Activated B cell treated with CpG ODN at 0.5 μM for 24 hours (primary cell): ENCODE measurements at regions of chr15 and their contacts with region 1.

Region 1: GRCh38 chr15:40307421-40308211 is at the start of gene PLCB2:
- DNase-seq: peak; percentile 67
- ATAC-seq: peak; percentile 77
- H3K4me3 Mint-ChIP-seq: peak within 1 kb of the TSS; percentile 93
- H3K27ac Mint-ChIP-seq: peak within 1 kb of the TSS; percentile 96
- H3K4me1 Mint-ChIP-seq: peaks cover 44% of the 10 kb centered on the region
- H3K27me3 Mint-ChIP-seq: no peaks in the 10 kb centered on the region
- CTCF ChIP-seq: no peak
- total RNA-seq, gene PLCB2: 109 and 126 TPM in 2 replicates

Region 2: GRCh38 chr15:40038638-40039543 is 268.7 kb before region 1 on chr15 and contains the start of gene SRP14:
- CTCF ChIA-PET with region 1: no interaction called
- POLR2A ChIA-PET with region 1: interaction called, 16 read pairs
- intact Hi-C with region 1: no loop called
- DNase-seq: peak; percentile 89
- ATAC-seq: peak; percentile 97
- H3K4me3 Mint-ChIP-seq: peak within 1 kb of the TSS; percentile 99
- H3K27ac Mint-ChIP-seq: peak within 1 kb of the TSS; percentile 95
- H3K4me1 Mint-ChIP-seq: peaks cover 30% of the 10 kb centered on the region
- H3K27me3 Mint-ChIP-seq: no peaks in the 10 kb centered on the region
- CTCF ChIP-seq: no peak
- total RNA-seq, gene SRP14: 183 and 217 TPM in 2 replicates

Region 3: DNA sequence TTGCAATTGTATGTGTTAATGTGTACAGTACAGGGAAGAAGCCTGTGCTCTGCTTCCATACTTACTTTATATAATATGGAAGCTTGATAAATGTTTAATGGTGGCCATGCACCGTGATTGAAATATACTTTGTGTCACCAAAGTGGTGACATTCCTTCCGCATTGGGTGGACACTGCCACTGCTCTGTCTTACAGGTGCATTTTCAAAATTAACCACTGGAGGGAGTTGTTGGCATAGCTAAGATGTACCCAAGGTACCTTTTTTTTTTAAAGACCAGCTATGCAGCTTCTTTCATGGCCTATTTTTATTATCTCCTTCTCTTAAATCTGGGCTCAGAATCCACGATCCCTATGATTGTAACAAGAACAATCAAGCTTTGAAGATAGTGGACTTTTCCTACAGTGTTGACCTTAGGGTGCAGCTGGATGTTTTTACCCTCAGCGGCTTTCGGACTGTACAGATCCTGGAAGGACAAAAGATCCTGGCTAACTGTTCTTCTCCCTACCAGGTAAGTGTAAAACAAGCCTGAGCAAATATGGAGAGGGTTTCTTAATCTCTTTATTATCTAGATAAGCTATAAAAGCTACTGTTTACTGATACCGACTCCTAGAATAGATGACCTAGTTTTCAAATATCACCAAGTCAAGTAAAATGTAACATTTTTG is 90.3 kb before region 1 on chr15:
- CTCF ChIA-PET with region 1: interaction called, 13 read pairs
- POLR2A ChIA-PET with region 1: no interaction called
- intact Hi-C with region 1: no loop called
- DNase-seq: no peak
- ATAC-seq: peak; percentile 100
- H3K4me3 Mint-ChIP-seq: no peak overlapping the region
- H3K27ac Mint-ChIP-seq: no peak overlapping the region
- H3K4me1 Mint-ChIP-seq: no peaks in the 10 kb centered on the region
- H3K27me3 Mint-ChIP-seq: no peaks in the 10 kb centered on the region
- CTCF ChIP-seq: peak; percentile 41

Region 4: DNA sequence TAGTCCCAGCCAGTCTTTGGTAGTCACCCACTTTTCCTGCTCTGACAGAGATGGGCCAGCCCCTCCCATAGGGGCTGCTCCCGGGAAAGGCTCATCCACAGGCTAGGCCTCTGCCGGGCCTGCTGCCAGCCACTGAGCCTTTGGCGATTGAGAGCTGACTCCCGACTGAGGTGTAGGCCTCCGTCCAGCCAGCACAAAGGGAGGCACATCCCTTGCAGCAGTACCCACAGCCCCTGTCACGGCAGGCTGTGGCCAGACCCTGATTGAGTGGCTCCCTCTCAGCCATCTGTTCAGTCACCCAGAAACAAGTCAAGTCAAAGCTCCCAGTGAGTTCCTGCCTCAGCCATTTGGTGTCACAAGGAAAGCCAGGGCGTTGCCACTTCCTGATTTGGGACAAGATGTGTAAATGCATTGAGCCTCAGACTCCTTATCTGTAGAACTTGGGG is 75.0 kb before region 1 on chr15:
- CTCF ChIA-PET with region 1: no interaction called
- POLR2A ChIA-PET with region 1: no interaction called
- intact Hi-C with region 1: no loop called
- DNase-seq: no peak
- ATAC-seq: no peak
- H3K4me3 Mint-ChIP-seq: no peak overlapping the region
- H3K27ac Mint-ChIP-seq: no peak overlapping the region
- H3K4me1 Mint-ChIP-seq: peaks cover 19% of the 10 kb centered on the region
- H3K27me3 Mint-ChIP-seq: no peaks in the 10 kb centered on the region
- CTCF ChIP-seq: no peak

Region 5: GRCh38 chr15:40282144-40282868 is 25.3 kb before region 1 on chr15:
- CTCF ChIA-PET with region 1: interaction called, 124 read pairs
- POLR2A ChIA-PET with region 1: interaction called, 14 read pairs
- intact Hi-C with region 1: loop called (anchors 1 kb)
- DNase-seq: peak; percentile 67
- ATAC-seq: peak; percentile 66
- H3K4me3 Mint-ChIP-seq: peak overlapping the region; percentile 76
- H3K27ac Mint-ChIP-seq: no peak overlapping the region
- H3K4me1 Mint-ChIP-seq: peaks cover 17% of the 10 kb centered on the region
- H3K27me3 Mint-ChIP-seq: peaks cover 5% of the 10 kb centered on the region
- CTCF ChIP-seq: no peak

Region 6: DNA sequence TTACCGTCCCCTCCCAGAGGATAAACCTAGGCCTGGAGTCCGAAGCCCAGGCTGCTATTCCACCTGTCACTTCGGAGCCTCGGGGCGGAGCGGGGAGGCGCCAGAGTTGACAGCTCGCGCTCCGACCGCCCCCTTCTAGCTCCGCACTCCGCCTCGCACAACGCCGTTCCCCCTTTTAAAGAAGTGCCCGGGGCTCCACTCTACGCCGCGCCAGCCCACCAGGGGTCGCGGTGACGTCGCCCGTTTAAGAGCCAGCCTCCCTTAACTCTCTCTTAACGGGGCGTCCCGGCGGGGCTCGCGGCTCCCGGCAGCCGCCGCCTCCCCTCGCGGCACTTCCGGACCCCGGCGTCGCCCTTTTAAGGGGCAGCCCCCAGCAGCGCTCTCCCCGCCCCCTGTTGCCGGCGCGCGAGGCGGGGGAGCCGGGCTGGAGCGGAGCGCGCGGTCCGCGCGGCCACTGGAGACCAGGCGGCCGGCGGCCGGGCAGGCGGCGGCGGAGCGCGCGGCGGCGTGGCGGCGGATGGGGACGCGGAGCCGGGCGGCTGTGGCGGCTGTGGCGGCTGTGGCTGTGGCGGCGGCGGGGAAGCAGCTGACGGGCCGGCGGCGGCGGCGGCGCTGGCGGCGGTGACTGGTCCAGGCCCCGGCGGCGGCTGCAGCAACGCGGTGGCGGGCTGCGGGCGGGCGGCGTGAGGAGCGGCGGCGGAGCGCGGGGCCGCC is 15.8 kb after region 1 on chr15 and contains the start of gene INAFM2:
- CTCF ChIA-PET with region 1: interaction called, 57 read pairs
- POLR2A ChIA-PET with region 1: interaction called, 34 read pairs
- intact Hi-C with region 1: loop called (anchors 1 kb)
- DNase-seq: peak; percentile 88
- ATAC-seq: peak; percentile 92
- H3K4me3 Mint-ChIP-seq: peak within 1 kb of the TSS; percentile 80
- H3K27ac Mint-ChIP-seq: peak within 1 kb of the TSS; percentile 65
- H3K4me1 Mint-ChIP-seq: peaks cover 29% of the 10 kb centered on the region
- H3K27me3 Mint-ChIP-seq: no peaks in the 10 kb centered on the region
- CTCF ChIP-seq: no peak
- total RNA-seq, gene INAFM2: 9.5 TPM in 2 replicates

Region 7: DNA sequence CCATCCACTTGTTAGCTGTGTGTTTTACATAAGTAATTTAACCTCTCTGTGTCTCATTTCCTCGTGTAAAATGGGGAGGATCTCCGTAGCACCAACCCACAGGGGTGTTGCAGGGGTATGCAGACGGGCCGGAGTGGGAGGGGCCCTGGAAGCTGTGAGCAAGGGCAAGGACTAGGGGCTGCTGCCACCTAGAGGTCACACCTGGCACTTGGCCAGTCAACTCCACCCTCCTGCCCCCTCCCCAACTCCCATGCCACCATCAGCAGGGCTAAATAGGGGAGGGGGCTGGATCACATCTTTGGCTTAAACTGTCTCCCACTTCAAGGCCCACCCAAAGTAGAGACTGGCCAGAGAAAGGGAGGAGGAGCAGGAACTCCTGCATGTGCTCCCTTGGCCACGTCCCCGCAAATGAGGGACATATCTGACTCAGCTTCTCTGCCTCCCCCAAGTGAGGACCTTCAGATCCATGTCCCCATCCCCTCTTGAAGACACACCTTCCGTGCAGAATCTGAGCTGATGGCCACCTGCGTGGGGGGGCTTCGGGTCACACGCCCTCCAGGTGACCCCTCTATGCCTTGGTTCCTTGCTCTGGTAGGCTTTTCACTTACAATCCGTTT is 30.5 kb after region 1 on chr15:
- CTCF ChIA-PET with region 1: interaction called, 310 read pairs
- POLR2A ChIA-PET with region 1: interaction called, 19 read pairs
- intact Hi-C with region 1: loop called (anchors 1 kb)
- DNase-seq: peak; percentile 67
- ATAC-seq: peak; percentile 96
- H3K4me3 Mint-ChIP-seq: no peak overlapping the region
- H3K27ac Mint-ChIP-seq: no peak overlapping the region
- H3K4me1 Mint-ChIP-seq: peaks cover 24% of the 10 kb centered on the region
- H3K27me3 Mint-ChIP-seq: no peaks in the 10 kb centered on the region
- CTCF ChIP-seq: peak; percentile 17

Region 8: GRCh38 chr15:40405501-40406381 is 98.1 kb after region 1 on chr15 and contains the start of gene IVD:
- CTCF ChIA-PET with region 1: interaction called, 3 read pairs
- POLR2A ChIA-PET with region 1: interaction called, 10 read pairs
- intact Hi-C with region 1: no loop called
- DNase-seq: peak; percentile 69
- ATAC-seq: peak; percentile 94
- H3K4me3 Mint-ChIP-seq: peak within 1 kb of the TSS; percentile 88
- H3K27ac Mint-ChIP-seq: peak within 1 kb of the TSS; percentile 67
- H3K4me1 Mint-ChIP-seq: peaks cover 34% of the 10 kb centered on the region
- H3K27me3 Mint-ChIP-seq: no peaks in the 10 kb centered on the region
- CTCF ChIP-seq: no peak
- total RNA-seq, gene IVD: 63.5 and 76.7 TPM in 2 replicates